HEK293 (cell line): ENCODE measurements at regions of chr4 and their contacts with region 1.

Region 1: GRCh38 chr4:110510955-110511544 is 35.1 kb downstream of the ENPEP start:
- H3K4me3 ChIP-seq: no peak overlapping the region
- H3K27ac ChIP-seq: no peak overlapping the region
- H3K4me1 ChIP-seq: no peaks in the 10 kb centered on the region
- CTCF ChIP-seq: no peak

Region 2: DNA sequence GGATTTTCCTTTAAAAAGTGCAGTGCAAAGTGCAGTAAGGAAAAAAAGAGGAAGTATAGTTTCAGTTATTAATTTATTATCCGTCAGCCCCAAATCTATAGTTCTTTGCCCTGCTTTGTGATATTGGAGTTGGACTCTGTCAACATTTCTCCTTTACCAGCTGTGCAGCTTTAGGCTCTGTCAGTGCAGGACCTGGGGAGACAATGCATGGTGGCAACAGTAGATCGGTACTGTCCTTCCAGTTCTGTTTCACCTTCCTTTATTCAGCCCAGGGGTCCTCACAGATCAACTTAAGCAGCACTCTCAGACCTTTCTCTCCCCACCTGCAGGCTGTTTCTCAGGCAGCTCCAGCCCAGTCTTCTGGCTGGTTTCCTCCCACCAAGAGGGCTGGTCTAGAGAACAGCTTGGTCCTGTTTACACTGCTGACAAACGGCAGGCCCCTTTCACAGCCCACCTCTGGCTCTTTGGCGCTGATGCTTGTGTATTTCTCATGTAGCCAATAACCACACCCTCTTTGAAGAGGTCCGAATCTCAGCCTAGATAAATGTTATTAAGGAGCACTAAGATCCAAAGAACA is 879.4 kb before region 1 on chr4:
- CTCF ChIA-PET with region 1: no interaction called
- POLR2A ChIA-PET with region 1: no interaction called
- H3K4me3 ChIP-seq: no peak overlapping the region
- H3K27ac ChIP-seq: no peak overlapping the region
- H3K4me1 ChIP-seq: peaks cover 6% of the 10 kb centered on the region; the same call in 1 of the 2 replicates
- CTCF ChIP-seq: no peak

Region 3: GRCh38 chr4:109998867-109999584 is 512.0 kb before region 1 on chr4:
- CTCF ChIA-PET with region 1: interaction called, 63 read pairs
- POLR2A ChIA-PET with region 1: no interaction called
- H3K4me3 ChIP-seq: no peak overlapping the region
- H3K27ac ChIP-seq: no peak overlapping the region
- H3K4me1 ChIP-seq: no peaks in the 10 kb centered on the region
- CTCF ChIP-seq: peak; percentile 41; the same call in 1 of the 2 replicates

Region 4: GRCh38 chr4:110005461-110006056 is 505.5 kb before region 1 on chr4:
- CTCF ChIA-PET with region 1: interaction called, 49 read pairs
- POLR2A ChIA-PET with region 1: no interaction called
- H3K4me3 ChIP-seq: no peak overlapping the region
- H3K27ac ChIP-seq: no peak overlapping the region
- H3K4me1 ChIP-seq: no peaks in the 10 kb centered on the region
- CTCF ChIP-seq: no peak; the same call in 1 of the 2 replicates

Region 5: DNA sequence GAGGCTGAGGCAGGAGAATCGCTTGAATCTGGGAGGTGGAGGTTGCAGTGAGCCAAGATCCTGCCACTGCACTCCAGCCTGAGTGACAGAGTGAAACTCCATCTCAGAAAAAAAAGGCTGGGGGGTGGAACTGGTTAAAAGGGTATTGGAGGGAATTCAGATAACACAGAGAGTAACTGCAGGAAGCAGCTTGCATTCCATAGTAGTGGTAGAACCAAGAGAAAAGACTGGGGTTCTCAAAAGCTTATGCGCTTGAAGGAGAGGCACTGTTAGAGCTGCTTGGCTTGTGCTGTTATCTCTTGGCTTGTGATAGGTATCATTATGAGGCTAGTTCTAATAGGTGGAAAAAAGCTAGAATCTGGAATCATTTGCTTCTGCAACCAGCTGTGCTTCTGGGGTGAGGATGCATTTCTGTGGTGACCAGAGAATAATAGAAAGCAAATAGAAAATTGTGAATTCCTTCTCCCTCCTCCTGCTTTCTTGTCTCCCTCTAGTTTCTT is 221.4 kb before region 1 on chr4:
- CTCF ChIA-PET with region 1: interaction called, 10 read pairs
- POLR2A ChIA-PET with region 1: no interaction called
- H3K4me3 ChIP-seq: no peak overlapping the region
- H3K27ac ChIP-seq: no peak overlapping the region
- H3K4me1 ChIP-seq: no peaks in the 10 kb centered on the region
- CTCF ChIP-seq: no peak

Region 6: DNA sequence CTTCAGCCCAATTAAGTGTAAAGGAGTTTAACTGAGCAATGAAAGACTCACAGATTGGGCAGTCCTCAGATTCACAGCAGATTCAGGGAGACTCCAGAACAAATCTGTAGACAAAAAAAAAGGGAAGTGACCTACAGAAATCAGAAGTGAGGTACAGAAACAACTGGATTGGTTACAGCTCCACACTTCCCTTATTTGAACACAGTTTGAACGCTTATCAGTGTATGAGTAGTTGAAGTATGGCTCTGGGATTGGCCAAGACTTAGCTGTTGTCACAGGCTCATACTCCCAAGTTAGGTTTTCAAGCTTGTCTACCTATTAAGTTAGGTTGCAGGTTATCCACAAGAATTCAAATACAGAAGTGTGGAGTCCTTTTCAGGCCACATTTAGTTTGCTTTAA is 200.3 kb before region 1 on chr4:
- CTCF ChIA-PET with region 1: interaction called, 17 read pairs
- POLR2A ChIA-PET with region 1: no interaction called
- H3K4me3 ChIP-seq: no peak overlapping the region
- H3K27ac ChIP-seq: no peak overlapping the region
- H3K4me1 ChIP-seq: no peaks in the 10 kb centered on the region
- CTCF ChIP-seq: no peak

Region 7: DNA sequence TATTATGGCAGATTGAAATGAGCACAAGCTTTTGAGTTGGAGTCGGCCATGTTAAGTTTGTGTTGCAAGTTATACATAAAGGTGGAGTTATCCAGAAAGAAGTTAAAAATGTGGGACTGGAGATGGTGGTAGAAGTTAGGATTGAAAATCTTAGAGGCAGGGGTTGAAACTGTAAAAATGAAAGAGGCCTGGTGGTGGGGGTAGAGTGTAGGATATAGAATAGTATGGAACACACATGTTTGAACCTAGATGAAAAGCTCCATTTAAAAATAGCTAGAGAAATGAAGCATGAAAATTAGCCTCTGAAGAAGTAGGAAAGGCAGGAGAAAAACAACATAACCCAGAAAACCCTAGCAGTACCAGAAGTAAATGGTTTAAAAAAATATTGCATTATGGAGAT is 166.9 kb before region 1 on chr4:
- CTCF ChIA-PET with region 1: interaction called, 132 read pairs
- POLR2A ChIA-PET with region 1: interaction called, 3 read pairs
- H3K4me3 ChIP-seq: no peak overlapping the region
- H3K27ac ChIP-seq: no peak overlapping the region
- H3K4me1 ChIP-seq: no peaks in the 10 kb centered on the region
- CTCF ChIP-seq: peak; percentile 50; the same call in 1 of the 2 replicates

Region 8: DNA sequence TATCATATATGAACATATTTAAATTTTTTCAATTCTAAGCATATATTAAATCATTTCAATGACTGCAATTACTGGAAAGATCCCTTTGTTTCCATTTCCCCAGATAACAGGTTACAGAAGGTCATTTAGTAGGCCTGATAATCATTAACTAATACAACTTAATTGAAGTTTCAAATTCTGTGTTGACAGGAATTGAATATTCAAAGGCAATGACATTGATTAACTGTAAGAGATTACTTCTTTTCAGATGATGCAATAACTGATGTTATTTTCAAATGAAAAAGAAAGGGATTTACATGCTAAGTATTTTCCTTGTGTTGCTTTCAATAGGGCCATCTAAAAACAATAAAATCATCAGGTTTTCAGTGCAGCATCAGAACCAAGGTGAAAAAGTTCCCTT is 116.2 kb before region 1 on chr4:
- CTCF ChIA-PET with region 1: no interaction called
- POLR2A ChIA-PET with region 1: no interaction called
- H3K4me3 ChIP-seq: no peak overlapping the region
- H3K27ac ChIP-seq: no peak overlapping the region
- H3K4me1 ChIP-seq: no peaks in the 10 kb centered on the region
- CTCF ChIP-seq: no peak

Region 9: DNA sequence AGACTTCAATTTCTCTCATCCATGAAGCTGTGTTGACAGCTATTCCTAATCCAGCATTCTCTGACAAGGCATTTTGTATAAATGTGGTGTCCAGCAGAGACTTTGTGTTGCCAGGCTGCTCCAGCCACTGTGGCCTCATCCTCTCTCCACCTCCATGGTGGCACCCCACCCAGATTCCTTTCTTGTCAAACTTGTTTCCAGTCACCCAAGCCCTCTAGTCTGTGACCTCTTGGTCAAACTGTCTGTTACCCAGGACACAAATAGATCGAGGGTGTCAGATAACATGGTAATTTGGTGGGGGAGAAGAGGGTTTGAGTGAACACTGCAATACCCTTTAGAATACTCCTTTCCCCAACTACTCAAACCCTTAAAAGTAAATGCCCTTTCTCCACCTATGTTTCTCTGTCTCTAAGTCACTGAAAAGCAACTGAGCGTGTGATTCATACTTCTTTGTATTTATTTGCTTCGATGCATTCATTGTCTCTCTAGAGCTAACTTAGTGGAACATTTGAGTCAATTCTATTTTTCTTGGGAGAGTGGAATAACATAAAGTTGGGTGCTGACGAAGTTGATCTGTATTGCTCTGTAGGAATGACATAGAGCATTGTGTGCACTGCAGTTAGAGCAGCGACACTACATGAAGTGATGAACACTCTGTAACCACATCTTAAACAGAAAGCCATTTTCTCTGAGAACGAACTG is 98.2 kb after region 1 on chr4:
- CTCF ChIA-PET with region 1: no interaction called
- POLR2A ChIA-PET with region 1: no interaction called
- H3K4me3 ChIP-seq: no peak overlapping the region
- H3K27ac ChIP-seq: no peak overlapping the region
- H3K4me1 ChIP-seq: no peaks in the 10 kb centered on the region
- CTCF ChIP-seq: no peak